ENCODE measurements at regions of chr1 and their contacts with region 1.

Region 1: GRCh38 chr1:226708342-226708780 is 30.7 kb downstream of the ITPKB start:
- DNase-seq: no peak
- ATAC-seq: peak; percentile 28
- H3K4me3 Mint-ChIP-seq: no peak overlapping the region
- H3K27ac Mint-ChIP-seq: peak overlapping the region; percentile 79
- H3K4me1 Mint-ChIP-seq: peaks cover 70% of the 10 kb centered on the region
- H3K27me3 Mint-ChIP-seq: no peaks in the 10 kb centered on the region

Region 2: DNA sequence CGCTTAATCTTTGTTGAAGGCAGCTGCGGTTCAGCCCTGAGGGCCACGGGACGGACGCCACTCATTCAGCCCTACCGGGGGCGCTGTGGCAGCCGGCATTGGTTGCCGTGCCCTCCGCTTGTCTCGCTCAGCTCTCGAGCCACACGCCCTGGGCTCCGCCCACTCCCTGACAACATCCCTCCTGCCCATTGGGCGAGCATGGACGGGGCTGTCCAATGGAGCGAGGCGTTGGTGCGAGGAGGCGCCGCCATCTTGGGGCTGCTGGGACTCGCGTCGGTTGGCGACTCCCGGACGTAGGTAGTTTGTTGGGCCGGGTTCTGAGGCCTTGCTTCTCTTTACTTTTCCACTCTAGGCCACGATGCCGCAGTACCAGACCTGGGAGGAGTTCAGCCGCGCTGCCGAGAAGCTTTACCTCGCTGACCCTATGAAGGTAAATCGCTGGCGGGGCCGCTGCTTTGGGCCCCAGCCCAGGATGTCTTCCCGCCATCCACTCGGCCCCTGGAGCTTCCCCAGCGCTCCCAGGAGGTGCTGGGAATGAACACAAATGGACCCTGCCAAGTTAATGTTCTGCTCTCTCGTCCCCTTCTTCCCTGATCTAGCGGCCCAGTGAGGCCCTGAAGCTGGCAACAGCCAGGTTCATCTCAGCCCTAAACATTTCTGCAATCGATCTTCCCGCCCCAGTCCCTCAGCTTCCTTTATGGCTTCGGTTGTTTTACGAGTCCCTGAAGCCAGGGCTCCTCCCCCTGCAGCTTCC is 930.6 kb before region 1 on chr1 and contains the start of gene SRP9:
- CTCF ChIA-PET with region 1: no interaction called
- DNase-seq: peak; percentile 100
- ATAC-seq: peak; percentile 99
- H3K4me3 Mint-ChIP-seq: no peak within 1 kb of the TSS
- H3K27ac Mint-ChIP-seq: no peak within 1 kb of the TSS
- H3K4me1 Mint-ChIP-seq: peaks cover 29% of the 10 kb centered on the region
- H3K27me3 Mint-ChIP-seq: no peaks in the 10 kb centered on the region
- total RNA-seq, gene SRP9: 198 to 225 TPM

Region 3: DNA sequence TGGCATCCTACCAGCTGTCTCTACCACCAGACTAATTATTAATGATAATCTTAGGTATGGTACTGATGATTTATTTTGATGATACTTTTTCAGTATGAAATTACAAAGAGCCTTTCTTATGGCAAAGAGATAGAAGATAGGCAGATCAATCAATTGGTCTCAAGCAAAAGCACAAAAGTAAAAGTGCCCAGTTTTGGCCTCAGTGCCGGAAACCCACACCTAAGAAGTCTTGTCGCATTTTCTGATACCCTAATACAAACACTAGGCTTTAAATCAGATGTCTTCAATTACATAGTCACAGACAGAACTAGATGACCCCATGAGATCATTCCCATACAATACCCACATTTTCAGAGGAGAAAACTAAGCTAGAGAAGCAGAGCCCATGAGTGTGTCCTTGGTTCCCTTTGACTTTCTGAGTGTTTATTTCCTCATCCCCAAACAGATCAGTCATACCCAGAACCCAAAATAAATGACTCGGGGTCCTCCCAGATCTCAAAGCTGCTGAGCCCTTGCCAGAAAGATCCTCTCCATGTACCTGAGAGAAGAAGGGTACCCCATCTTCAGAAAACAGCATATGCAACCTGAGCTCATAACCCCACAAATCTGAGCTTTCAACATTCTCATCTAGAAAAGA is 23.0 kb after region 1 on chr1:
- CTCF ChIA-PET with region 1: interaction called, 14 read pairs
- DNase-seq: no peak
- ATAC-seq: peak; percentile 11
- H3K4me3 Mint-ChIP-seq: peak overlapping the region; percentile 88
- H3K27ac Mint-ChIP-seq: peak overlapping the region; percentile 66
- H3K4me1 Mint-ChIP-seq: peaks cover 91% of the 10 kb centered on the region
- H3K27me3 Mint-ChIP-seq: no peaks in the 10 kb centered on the region

Region 4: GRCh38 chr1:226736908-226737818 is 28.8 kb after region 1 on chr1:
- CTCF ChIA-PET with region 1: interaction called, 11 read pairs
- DNase-seq: peak; percentile 73
- ATAC-seq: peak; percentile 45
- H3K4me3 Mint-ChIP-seq: peak overlapping the region; percentile 88
- H3K27ac Mint-ChIP-seq: peak overlapping the region; percentile 94
- H3K4me1 Mint-ChIP-seq: peaks cover 58% of the 10 kb centered on the region
- H3K27me3 Mint-ChIP-seq: no peaks in the 10 kb centered on the region

Region 5: GRCh38 chr1:226763905-226764264 is 55.5 kb after region 1 on chr1:
- CTCF ChIA-PET with region 1: no interaction called
- DNase-seq: no peak
- ATAC-seq: no peak
- H3K4me3 Mint-ChIP-seq: no peak overlapping the region
- H3K27ac Mint-ChIP-seq: no peak overlapping the region
- H3K4me1 Mint-ChIP-seq: peaks cover 22% of the 10 kb centered on the region
- H3K27me3 Mint-ChIP-seq: no peaks in the 10 kb centered on the region